ENCODE measurements at regions of chr17 and their contacts with region 1.

Region 1: GRCh38 chr17:48593840-48594537 is 410 bp upstream of the HOXB5 start:
- DNase-seq: peak; percentile 85
- ATAC-seq: peak; percentile 66
- H3K4me3 Mint-ChIP-seq: peak overlapping the region; percentile 71
- H3K27ac Mint-ChIP-seq: no peak overlapping the region
- H3K4me1 Mint-ChIP-seq: peaks cover 53% of the 10 kb centered on the region
- H3K27me3 Mint-ChIP-seq: peaks cover 73% of the 10 kb centered on the region
- CTCF ChIP-seq: peak; percentile 50

Region 2: GRCh38 chr17:48307814-48308411 is 286.1 kb before region 1 on chr17:
- CTCF ChIA-PET with region 1: interaction called, 31 read pairs
- POLR2A ChIA-PET with region 1: no interaction called
- intact Hi-C with region 1: loop called (anchors 2 kb)
- DNase-seq: peak; percentile 20
- ATAC-seq: peak; percentile 86
- H3K4me3 Mint-ChIP-seq: no peak overlapping the region
- H3K27ac Mint-ChIP-seq: no peak overlapping the region
- H3K4me1 Mint-ChIP-seq: peaks cover 6% of the 10 kb centered on the region
- H3K27me3 Mint-ChIP-seq: no peaks in the 10 kb centered on the region
- CTCF ChIP-seq: peak; percentile 70

Region 3: DNA sequence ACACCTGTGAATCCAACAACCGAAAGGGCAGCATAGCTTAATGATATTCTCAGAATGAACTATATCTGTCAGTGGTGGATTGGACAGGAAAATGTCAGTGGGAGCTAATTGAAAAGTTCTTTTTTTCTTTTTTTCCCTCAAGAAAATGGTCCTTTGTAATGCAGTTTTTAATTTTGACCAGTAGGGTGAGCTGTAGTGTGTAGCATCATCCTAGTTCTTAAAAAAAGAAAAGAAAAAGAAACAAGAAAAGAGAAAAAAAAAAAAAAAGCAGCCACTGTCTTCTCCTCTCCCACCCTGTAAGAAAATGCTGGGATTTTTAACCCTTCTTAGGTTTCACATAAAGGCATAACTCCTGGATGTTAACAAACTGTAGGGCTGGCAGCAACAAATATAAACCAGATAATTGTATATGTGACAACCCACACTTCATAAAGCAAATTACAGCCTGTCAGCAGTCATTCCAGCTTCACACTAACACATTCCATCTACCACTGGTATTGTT is 242.1 kb before region 1 on chr17:
- CTCF ChIA-PET with region 1: interaction called, 16 read pairs
- POLR2A ChIA-PET with region 1: interaction called, 3 read pairs
- intact Hi-C with region 1: loop called (anchors 2 kb)
- DNase-seq: no peak
- ATAC-seq: peak; percentile 57
- H3K4me3 Mint-ChIP-seq: no peak overlapping the region
- H3K27ac Mint-ChIP-seq: no peak overlapping the region
- H3K4me1 Mint-ChIP-seq: peaks cover 3% of the 10 kb centered on the region
- H3K27me3 Mint-ChIP-seq: no peaks in the 10 kb centered on the region
- CTCF ChIP-seq: peak; percentile 33

Region 4: GRCh38 chr17:48577946-48578615 is 15.9 kb before region 1 on chr17 and contains the start of gene HOXB4:
- CTCF ChIA-PET with region 1: interaction called, 4 read pairs
- POLR2A ChIA-PET with region 1: interaction called, 3 read pairs
- intact Hi-C with region 1: loop called (anchors 1 kb)
- DNase-seq: peak; percentile 42
- ATAC-seq: peak; percentile 80
- H3K4me3 Mint-ChIP-seq: peak within 1 kb of the TSS; percentile 90
- H3K27ac Mint-ChIP-seq: peak within 1 kb of the TSS; percentile 60
- H3K4me1 Mint-ChIP-seq: peaks cover 49% of the 10 kb centered on the region
- H3K27me3 Mint-ChIP-seq: peaks cover 41% of the 10 kb centered on the region
- CTCF ChIP-seq: no peak
- total RNA-seq, gene HOXB4: 0.88 and 1.4 TPM in 2 replicates

Region 5: DNA sequence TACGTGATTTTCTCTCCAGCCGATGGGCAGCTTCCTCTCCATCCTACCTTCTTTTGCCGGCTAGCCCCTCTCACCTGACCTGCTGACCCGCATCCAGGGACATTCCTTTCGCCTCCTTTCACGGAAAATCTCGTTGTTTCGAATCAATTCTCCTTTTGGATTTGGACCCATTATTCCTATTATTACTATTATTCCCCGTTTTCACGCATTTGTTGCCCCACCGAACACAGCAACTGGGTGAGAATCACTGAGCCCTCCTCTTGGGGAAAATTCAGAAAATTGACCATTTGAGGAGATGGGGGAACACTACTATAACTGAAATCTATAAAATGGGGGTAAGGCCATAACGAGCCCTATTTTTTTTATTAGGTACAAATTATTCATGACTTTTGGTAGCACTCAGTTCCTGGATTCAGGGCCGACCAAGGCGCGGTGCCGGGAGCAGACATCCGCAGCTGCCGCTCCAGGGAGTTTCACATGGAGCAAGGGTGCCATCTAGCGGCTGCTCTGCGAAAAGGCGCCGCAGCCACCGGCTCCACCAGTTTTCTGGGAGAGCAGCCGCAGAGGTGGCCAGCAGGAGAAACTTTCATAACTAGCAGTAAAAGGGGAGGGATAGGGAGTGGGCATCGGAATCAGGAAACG is 24.4 kb after region 1 on chr17:
- CTCF ChIA-PET with region 1: interaction called, 29 read pairs
- POLR2A ChIA-PET with region 1: interaction called, 6 read pairs
- intact Hi-C with region 1: loop called (anchors 2 kb)
- DNase-seq: peak; percentile 77
- ATAC-seq: peak; percentile 84
- H3K4me3 Mint-ChIP-seq: no peak overlapping the region
- H3K27ac Mint-ChIP-seq: peak overlapping the region; percentile 9
- H3K4me1 Mint-ChIP-seq: peaks cover 26% of the 10 kb centered on the region
- H3K27me3 Mint-ChIP-seq: peaks cover 78% of the 10 kb centered on the region
- CTCF ChIP-seq: peak; percentile 66